AG04450 (cell line): ENCODE measurements at regions of chr10 and their contacts with region 1.

Region 1: GRCh38 chr10:14782691-14783363 is 8.1 kb upstream of the FAM107B start:
- DNase-seq: no peak
- H3K4me3 ChIP-seq: no peak overlapping the region
- H3K27ac ChIP-seq: no peak overlapping the region
- H3K27me3 ChIP-seq: no peaks in the 10 kb centered on the region
- CTCF ChIP-seq: no peak

Region 2: DNA sequence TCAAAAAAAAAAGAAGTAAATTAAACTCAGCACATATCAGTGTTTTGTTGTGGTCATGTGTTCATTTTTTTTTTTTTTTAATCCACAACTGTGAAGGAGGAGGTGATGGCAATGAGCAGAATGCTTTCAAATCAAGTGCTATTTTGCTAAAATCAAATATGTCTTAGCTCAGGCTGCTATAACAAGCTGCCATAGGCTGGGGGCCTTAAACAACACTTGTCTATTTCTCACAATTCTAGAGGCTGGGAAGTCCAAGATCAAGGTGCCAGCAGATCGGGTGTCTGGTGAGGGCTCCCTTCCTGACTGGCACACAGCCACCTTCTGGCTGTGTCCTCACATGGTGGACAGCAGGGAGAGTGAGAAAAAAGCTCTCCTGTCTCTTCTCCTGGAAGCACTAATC is 212.0 kb before region 1 on chr10:
- CTCF ChIA-PET with region 1: no interaction called
- POLR2A ChIA-PET with region 1: interaction called, 10 read pairs
- DNase-seq: no peak
- H3K4me3 ChIP-seq: no peak overlapping the region
- H3K27ac ChIP-seq: no peak overlapping the region
- H3K27me3 ChIP-seq: no peaks in the 10 kb centered on the region
- CTCF ChIP-seq: no peak